AG04450 (cell line): ENCODE measurements at regions of chr3 and their contacts with region 1.

Region 1: DNA sequence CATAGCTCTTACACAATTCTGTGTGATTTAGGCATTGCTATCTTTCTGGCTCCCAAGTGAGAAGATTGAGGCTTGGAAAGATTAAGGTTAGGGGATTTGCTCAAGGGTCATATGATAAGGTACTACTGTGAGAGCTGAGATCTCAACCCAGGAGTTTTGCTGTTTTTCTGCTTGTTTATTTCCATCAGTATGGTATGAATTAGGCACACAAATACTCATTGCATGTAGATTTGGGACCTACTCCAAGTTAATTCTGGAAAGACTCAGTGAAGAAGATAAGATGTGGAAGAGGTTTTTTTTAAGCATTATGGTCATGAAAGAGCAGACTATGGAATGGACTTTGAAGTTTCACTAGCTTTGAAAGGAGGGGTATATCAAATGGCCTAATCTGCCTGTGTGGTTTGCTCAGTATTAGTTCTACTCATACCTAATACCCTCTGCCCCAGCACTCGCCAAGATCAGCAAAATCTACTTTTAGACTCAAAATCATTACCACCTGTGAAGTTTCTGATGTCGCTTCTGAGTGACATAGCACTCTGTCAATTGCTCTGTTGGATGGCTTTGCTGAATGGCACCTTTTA is 12.5 kb downstream of the MBNL1 start:
- DNase-seq: no peak
- H3K4me3 ChIP-seq: no peak overlapping the region
- H3K27ac ChIP-seq: no peak overlapping the region
- H3K27me3 ChIP-seq: no peaks in the 10 kb centered on the region
- CTCF ChIP-seq: no peak

Region 2: DNA sequence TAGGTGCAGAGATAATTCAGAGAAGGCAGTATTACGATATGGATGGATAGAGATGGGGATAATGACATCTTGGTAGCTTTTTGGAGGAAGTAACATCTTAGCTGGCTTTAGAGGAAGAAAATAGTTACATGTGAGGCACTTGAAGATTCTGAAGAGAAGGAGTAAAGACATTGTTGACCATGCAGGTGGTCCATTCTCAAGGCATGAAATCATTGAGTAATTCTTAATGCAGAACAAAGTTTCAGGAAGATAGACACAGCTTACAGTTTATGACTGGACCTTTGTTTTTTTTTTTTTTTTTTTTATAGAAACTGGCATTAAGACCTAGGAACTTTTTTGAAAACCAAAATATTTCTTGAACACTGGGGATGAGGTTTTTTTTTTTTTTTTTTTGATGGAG is 15.7 kb after region 1 on chr3:
- CTCF ChIA-PET with region 1: interaction called, 4 read pairs
- POLR2A ChIA-PET with region 1: interaction called, 11 read pairs
- DNase-seq: no peak
- H3K4me3 ChIP-seq: no peak overlapping the region
- H3K27ac ChIP-seq: no peak overlapping the region
- H3K27me3 ChIP-seq: no peaks in the 10 kb centered on the region
- CTCF ChIP-seq: no peak